ENCODE measurements at regions of chr1 and their contacts with region 1.

Region 1: DNA sequence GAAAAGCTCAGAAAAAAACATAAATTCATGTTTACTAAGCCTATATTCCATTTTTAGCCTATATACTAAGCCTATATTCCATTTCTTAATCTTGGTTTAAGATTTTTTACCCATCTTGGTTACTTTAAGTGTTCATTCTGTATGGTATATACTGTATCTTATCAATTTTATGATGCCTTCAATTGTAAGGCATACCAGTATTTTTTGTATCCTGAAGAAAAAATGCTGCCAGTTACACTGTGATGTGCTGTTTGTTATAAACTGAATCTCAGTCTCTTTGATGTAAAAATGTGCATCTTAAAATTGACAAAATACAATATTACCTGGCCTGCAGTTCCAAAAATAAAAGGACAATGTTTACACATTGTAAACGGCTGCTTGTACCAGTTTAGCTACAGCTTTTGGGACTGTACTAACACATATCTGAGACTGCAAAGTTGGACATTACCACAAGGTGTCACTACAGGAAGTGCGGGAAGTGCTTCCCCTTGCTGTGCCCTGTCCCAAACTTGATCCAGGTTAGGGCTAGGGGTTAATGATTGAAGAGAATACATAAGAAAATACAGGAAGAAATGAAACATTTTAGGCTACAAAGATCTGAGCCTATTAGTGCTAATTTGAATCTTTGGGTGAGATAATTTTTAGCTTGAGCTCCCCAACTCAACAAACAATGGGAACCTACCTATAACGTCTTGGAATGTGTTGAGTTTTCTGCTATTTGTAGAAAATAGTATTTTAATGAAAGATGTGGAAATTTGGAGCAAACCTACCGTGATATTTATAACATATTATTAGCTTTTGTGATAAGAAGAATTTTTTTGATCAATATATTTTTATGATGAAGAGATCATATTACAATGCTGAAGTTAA is 108.9 kb downstream of the LBR start:
- DNase-seq: peak; percentile 35
- CTCF ChIP-seq: peak; percentile 65

Region 2: GRCh38 chr1:225304996-225305395 is 13.9 kb before region 1 on chr1:
- CTCF ChIA-PET with region 1: interaction called, 10 read pairs
- POLR2A ChIA-PET with region 1: no interaction called
- DNase-seq: no peak
- CTCF ChIP-seq: no peak

Region 3: GRCh38 chr1:225329041-225329440 is 10.1 kb after region 1 on chr1:
- CTCF ChIA-PET with region 1: interaction called, 11 read pairs
- POLR2A ChIA-PET with region 1: no interaction called
- DNase-seq: no peak
- CTCF ChIP-seq: no peak

Measured in GM10248 (cell line).